ENCODE measurements at regions of chr17 and their contacts with region 1.

Region 1: GRCh38 chr17:17420561-17421269 is 56.1 kb upstream of the MED9 start:
- DNase-seq: peak; percentile 92
- ATAC-seq: peak; percentile 78

Region 2: GRCh38 chr17:17363638-17364337 is 56.9 kb before region 1 on chr17:
- intact Hi-C with region 1: loop called (anchors 2 kb)
- DNase-seq: peak; percentile 60
- ATAC-seq: no peak

Region 3: GRCh38 chr17:17476865-17477467 is 56.3 kb after region 1 on chr17 and contains the start of gene MED9:
- intact Hi-C with region 1: loop called (anchors 5 kb)
- DNase-seq: peak; percentile 97
- ATAC-seq: peak; percentile 98
- total RNA-seq, gene MED9: 40.4 TPM